GM12878 (cell line): ENCODE measurements at regions of chr13 and their contacts with region 1.

Region 1: DNA sequence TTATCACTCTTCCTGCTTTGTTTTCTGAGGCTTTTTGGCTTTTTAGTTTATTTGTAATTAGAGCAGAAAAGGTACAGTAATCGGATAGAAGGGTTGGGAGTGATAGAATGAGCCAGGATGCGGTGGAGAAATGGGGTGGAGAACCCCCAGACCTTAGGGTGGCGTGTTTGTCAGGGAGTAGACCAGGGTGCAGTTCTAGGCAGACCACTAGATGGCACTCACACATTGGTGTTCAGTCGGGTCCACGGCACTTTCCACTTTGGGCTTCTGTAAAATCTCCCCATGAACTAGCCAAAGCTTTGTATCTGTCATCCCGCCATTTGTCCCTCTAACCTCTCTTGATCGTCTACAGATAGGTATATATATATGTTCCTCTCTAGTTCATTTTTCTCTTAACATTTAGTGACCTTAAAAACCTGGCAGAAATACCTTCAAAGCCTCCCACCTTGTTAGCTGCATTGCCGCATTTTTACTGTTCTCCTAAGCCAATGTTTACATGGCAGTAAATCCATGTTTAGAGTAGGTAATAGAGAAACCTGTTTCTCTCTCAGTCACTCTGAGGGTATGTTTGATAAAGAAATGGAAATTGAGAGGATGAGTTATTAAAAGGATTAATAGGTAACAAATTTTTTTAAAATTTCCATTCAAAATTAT is 154.9 kb downstream of the TM9SF2 start:
- DNase-seq: peak; percentile 40
- ATAC-seq: peak; percentile 92
- H3K4me3 ChIP-seq: no peak overlapping the region
- H3K27ac ChIP-seq: no peak overlapping the region
- H3K4me1 ChIP-seq: peaks cover 7% of the 10 kb centered on the region
- H3K27me3 ChIP-seq: no peaks in the 10 kb centered on the region
- CTCF ChIP-seq: peak; percentile 91 to 93 (median 91)
- EP300 ChIP-seq: no peak
- POLR2A ChIP-seq: no peak
- RAD21 ChIP-seq: peak; percentile 88

Region 2: GRCh38 chr13:99432609-99433542 is 223.3 kb before region 1 on chr13:
- CTCF ChIA-PET with region 1: no interaction called
- POLR2A ChIA-PET with region 1: no interaction called
- RAD21 ChIA-PET with region 1: no interaction called
- SMC1A ChIA-PET with region 1: no interaction called
- in situ Hi-C with region 1: no loop called
- intact Hi-C with region 1: no loop called
- DNase-seq: peak; percentile 97
- ATAC-seq: peak; percentile 72
- H3K4me3 ChIP-seq: peak overlapping the region; percentile 46; the same call in 1 of the 2 replicates
- H3K27ac ChIP-seq: peak overlapping the region; percentile 99
- H3K4me1 ChIP-seq: peaks cover 68% of the 10 kb centered on the region
- H3K27me3 ChIP-seq: no peaks in the 10 kb centered on the region
- CTCF ChIP-seq: no peak
- EP300 ChIP-seq: peak; percentile 64 to 83; a peak in 3 of 4 replicates
- POLR2A ChIP-seq: no peak
- RAD21 ChIP-seq: 0 out of 2 replicates have a peak, but pooled peaks have one; percentile 28

Region 3: GRCh38 chr13:99617474-99618255 is 38.6 kb before region 1 on chr13:
- CTCF ChIA-PET with region 1: interaction called, 3 read pairs
- POLR2A ChIA-PET with region 1: no interaction called
- RAD21 ChIA-PET with region 1: no interaction called
- SMC1A ChIA-PET with region 1: no interaction called
- in situ Hi-C with region 1: no loop called
- intact Hi-C with region 1: loop called (anchors 2 kb)
- DNase-seq: no peak
- ATAC-seq: peak; percentile 85
- H3K4me3 ChIP-seq: no peak overlapping the region
- H3K27ac ChIP-seq: no peak overlapping the region
- H3K4me1 ChIP-seq: no peaks in the 10 kb centered on the region
- H3K27me3 ChIP-seq: no peaks in the 10 kb centered on the region; a peak in 1 of 4 replicates
- CTCF ChIP-seq: peak; percentile 65 to 81 (median 74)
- EP300 ChIP-seq: no peak
- POLR2A ChIP-seq: no peak
- RAD21 ChIP-seq: peak; percentile 62

Region 4: DNA sequence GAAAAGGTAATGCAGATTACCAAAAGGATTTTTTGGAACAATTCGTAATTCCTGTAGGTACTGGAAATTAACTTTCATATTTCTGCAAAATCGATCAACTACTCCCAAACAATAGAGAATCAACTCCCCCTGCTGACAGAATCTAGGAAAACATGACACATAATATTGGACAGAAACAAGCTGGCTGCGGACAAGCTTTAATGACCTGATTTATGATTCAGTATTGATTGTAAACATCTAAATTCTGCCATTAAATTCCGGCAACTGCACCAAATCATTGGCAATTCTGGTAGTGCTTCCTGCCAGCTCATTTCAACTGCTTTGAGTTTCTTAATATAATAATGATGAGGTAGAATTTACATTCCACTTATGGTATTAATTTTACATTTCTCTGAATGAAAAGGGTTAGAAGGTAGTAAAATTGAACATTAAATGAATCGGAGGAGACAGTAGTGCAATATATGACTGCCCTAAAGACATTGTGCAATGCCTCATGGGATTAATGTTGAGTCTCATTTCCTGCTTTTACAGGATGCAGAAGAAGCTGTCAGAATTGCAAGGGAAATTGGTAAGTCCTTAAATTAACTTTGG is 579.2 kb after region 1 on chr13:
- CTCF ChIA-PET with region 1: interaction called, 25 read pairs
- POLR2A ChIA-PET with region 1: no interaction called
- RAD21 ChIA-PET with region 1: interaction called, 5 read pairs
- SMC1A ChIA-PET with region 1: interaction called, 14 read pairs
- in situ Hi-C with region 1: loop called (anchors 10 kb)
- intact Hi-C with region 1: loop called (anchors 1 kb)
- DNase-seq: no peak
- ATAC-seq: peak; percentile 71
- H3K4me3 ChIP-seq: no peak overlapping the region
- H3K27ac ChIP-seq: no peak overlapping the region
- H3K4me1 ChIP-seq: no peaks in the 10 kb centered on the region; the same call in none of the 2 replicates
- H3K27me3 ChIP-seq: no peaks in the 10 kb centered on the region
- CTCF ChIP-seq: peak; percentile 30 to 53 (median 34); a peak in 4 of 6 replicates
- EP300 ChIP-seq: no peak
- POLR2A ChIP-seq: no peak
- RAD21 ChIP-seq: peak; percentile 83

Region 5: DNA sequence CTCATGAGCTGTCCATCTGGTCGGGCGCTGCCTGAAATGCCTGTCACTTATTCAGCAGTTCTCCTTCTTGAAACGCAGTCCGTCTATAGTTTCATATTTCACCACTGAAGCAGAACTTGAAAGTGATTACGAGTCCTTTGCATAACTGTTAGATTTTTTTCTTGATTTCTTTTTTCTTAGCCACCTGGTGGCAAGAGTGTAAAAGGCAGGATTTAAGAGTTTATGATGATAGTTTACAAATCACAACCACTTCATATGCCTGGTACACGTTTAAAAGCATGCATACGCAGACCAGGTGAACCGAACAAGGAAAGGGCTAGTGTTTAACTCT is 886.6 kb after region 1 on chr13:
- CTCF ChIA-PET with region 1: no interaction called
- POLR2A ChIA-PET with region 1: no interaction called
- RAD21 ChIA-PET with region 1: no interaction called
- SMC1A ChIA-PET with region 1: no interaction called
- in situ Hi-C with region 1: no loop called
- intact Hi-C with region 1: loop called (anchors 10 kb)
- DNase-seq: peak; percentile 43
- ATAC-seq: peak; percentile 90
- H3K4me3 ChIP-seq: no peak overlapping the region
- H3K27ac ChIP-seq: no peak overlapping the region
- H3K4me1 ChIP-seq: peaks cover 6% of the 10 kb centered on the region
- H3K27me3 ChIP-seq: no peaks in the 10 kb centered on the region
- CTCF ChIP-seq: peak; percentile 43 to 65 (median 53); a peak in 5 of 6 replicates
- EP300 ChIP-seq: no peak
- POLR2A ChIP-seq: no peak
- RAD21 ChIP-seq: peak; percentile 48